PC-9 (cell line): ENCODE measurements at regions of chr22 and their contacts with region 1.

Region 1: GRCh38 chr22:19806213-19807145 is 45.9 kb downstream of the TBX1 start:
- DNase-seq: peak; percentile 91 to 94
- H3K4me3 ChIP-seq: peak overlapping the region; percentile 19; the same call in 1 of the 2 replicates
- H3K27ac ChIP-seq: peak overlapping the region; percentile 71
- H3K4me1 ChIP-seq: peaks cover 27% of the 10 kb centered on the region
- H3K27me3 ChIP-seq: no peaks in the 10 kb centered on the region
- CTCF ChIP-seq: no peak

Region 2: DNA sequence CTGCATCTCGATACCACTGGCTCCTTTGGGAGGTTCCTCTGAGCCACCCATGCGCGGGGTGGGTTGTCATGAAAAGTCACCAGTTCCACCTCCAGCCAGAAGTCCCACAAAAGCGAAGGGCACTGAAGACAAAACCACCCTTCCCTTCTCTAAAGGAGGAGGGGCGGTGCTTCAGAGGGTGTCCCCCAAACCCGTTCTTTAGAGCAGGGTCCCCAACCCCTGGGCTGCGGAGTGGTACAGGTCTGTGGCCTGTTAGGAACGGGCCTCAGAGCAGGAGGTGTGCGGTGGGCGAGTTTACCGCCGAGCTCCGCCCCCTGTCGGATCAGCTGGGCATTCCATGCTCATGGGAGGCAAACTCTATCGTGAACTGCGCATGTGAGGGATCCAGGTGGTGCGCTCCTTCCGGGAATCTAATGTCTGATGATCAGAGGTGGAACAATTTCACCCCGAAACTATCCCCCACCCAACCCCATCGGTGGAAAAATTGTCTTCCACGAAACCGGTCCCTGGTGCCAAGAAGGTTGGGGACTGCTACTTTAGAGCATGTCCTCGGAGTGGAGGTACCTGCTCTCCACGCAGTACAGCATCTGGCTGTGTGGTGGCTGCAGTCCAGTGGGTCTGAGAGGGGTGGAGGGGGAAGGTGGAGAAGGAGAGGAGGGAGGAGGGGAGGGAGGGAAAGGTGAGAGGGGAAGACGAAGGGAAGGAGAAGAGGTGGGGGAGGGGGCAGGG is 165.1 kb before region 1 on chr22:
- CTCF ChIA-PET with region 1: no interaction called
- POLR2A ChIA-PET with region 1: no interaction called
- intact Hi-C with region 1: no loop called
- DNase-seq: peak in 1 of 2 experiments; percentile 17
- H3K4me3 ChIP-seq: no peak overlapping the region
- H3K27ac ChIP-seq: no peak overlapping the region
- H3K4me1 ChIP-seq: no peaks in the 10 kb centered on the region
- H3K27me3 ChIP-seq: no peaks in the 10 kb centered on the region
- CTCF ChIP-seq: peak; percentile 39

Region 3: DNA sequence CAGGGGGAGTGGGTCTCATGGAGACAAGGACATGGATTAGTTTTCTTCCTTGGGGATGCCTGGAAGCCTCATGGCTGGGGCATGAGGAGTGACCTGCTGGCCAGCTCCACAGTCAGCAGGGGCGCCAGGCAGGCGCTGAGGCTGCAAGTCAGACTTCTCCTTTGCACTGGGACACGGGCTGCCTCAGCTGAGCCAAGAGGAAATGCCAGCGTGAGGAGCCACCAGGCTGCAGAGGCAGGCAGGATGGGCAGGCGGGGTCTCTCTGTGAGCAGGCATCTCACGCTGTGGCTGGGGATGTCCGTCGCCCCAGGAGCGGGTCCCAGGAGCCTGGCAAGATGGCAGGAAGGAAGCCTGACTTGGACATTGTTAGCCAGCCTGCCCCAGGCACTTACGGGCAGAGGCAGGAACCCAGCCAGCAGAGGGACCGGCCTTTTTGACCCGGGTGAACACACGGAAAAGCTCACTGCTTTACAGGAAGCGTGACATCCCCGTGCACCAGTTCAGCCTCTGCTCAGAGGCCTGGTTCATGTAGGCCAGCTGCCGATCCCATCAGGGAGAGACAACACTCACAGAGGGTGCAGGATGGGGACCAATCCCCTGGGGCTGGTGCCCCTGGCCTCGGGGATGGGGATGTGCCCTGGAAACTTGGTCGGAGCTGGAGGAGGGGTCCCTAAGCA is 38.0 kb after region 1 on chr22:
- CTCF ChIA-PET with region 1: no interaction called
- POLR2A ChIA-PET with region 1: no interaction called
- intact Hi-C with region 1: loop called (anchors 2 kb)
- DNase-seq: peak in 1 of 2 experiments; percentile 58
- H3K4me3 ChIP-seq: no peak overlapping the region
- H3K27ac ChIP-seq: no peak overlapping the region
- H3K4me1 ChIP-seq: peaks cover 18% of the 10 kb centered on the region
- H3K27me3 ChIP-seq: no peaks in the 10 kb centered on the region
- CTCF ChIP-seq: no peak

Region 4: DNA sequence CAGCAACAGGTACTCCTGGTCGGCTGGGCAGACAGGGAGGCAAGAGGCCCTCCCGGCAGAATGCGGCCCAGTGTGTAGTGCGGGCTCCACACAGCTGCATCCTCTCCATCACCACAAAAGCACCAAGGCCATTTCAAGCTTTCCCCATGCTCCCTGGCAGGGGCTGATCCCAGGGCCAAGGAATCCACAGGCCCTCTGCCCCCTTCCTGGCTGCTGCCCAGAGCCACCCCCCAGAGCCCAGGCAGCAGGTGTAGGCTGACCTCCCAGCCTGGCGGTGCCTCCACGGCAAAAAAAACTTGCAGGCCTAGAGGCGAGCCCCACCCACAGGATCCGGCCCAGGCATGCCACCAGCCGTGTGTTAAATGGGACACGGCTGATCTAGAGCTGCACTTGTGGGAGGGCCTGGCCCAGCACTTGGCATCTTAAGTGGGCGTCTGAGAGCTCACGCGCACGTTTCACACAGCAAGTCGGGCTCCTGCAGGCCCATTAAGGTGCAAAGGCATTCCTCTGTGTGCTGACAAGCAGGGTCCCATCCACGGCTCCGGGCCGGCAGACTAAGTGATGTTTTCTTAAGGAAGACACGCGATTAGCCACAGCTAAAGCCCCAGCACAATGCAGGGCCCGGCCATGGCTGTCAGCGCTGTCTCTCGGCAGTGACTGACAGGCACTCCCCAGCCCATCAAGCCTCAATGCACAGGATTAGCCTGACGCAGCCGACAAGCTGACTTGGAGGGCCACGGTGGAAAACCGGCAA is 68.0 kb after region 1 on chr22:
- CTCF ChIA-PET with region 1: no interaction called
- POLR2A ChIA-PET with region 1: no interaction called
- intact Hi-C with region 1: loop called (anchors 1 kb)
- DNase-seq: no peak
- H3K4me3 ChIP-seq: no peak overlapping the region
- H3K27ac ChIP-seq: no peak overlapping the region
- H3K4me1 ChIP-seq: no peaks in the 10 kb centered on the region
- H3K27me3 ChIP-seq: no peaks in the 10 kb centered on the region
- CTCF ChIP-seq: no peak

Region 5: DNA sequence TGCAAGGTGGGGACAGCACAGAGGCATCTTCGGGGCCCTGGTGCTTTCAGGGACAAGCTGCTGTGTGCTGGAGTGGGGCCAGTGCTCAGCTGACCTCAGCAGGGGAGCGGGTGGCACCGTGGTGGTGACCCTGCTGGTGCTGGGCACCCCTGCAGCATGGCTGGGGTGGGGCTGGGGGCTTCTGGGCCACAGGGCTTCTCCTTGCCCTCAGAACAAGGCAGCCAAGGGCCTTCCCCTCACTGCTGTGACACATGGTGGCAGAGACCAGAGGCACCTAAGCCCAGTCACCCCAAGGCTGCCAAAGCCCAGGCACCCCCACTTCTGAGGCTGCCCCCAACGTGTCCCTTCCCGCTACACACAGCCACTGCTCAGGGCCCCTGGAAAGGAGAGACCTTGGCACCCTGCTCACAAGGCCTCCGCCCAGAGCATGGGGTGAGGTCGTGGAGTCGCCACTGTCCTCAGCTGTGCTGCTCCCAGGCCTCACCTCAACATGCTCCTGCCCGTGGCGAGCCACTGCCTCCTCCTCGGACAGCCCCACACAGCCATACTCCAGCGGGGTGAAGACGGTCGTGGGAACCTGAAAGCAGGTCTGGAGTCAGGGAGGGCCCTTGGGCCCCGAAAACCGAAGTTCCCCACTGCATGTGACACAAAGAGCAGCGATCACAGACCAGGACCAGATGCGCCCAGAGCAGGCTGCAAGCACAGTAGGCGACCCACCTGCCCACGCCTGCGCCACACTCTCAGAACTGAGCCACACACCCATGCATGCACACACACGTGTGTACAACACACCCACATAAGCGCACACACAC is 73.4 kb after region 1 on chr22:
- CTCF ChIA-PET with region 1: no interaction called
- POLR2A ChIA-PET with region 1: no interaction called
- intact Hi-C with region 1: loop called (anchors 1 kb)
- DNase-seq: no peak
- H3K4me3 ChIP-seq: no peak overlapping the region
- H3K27ac ChIP-seq: no peak overlapping the region
- H3K4me1 ChIP-seq: peaks cover 25% of the 10 kb centered on the region
- H3K27me3 ChIP-seq: no peaks in the 10 kb centered on the region
- CTCF ChIP-seq: no peak